ENCODE measurements at regions of chr18 and their contacts with region 1.

Region 1: DNA sequence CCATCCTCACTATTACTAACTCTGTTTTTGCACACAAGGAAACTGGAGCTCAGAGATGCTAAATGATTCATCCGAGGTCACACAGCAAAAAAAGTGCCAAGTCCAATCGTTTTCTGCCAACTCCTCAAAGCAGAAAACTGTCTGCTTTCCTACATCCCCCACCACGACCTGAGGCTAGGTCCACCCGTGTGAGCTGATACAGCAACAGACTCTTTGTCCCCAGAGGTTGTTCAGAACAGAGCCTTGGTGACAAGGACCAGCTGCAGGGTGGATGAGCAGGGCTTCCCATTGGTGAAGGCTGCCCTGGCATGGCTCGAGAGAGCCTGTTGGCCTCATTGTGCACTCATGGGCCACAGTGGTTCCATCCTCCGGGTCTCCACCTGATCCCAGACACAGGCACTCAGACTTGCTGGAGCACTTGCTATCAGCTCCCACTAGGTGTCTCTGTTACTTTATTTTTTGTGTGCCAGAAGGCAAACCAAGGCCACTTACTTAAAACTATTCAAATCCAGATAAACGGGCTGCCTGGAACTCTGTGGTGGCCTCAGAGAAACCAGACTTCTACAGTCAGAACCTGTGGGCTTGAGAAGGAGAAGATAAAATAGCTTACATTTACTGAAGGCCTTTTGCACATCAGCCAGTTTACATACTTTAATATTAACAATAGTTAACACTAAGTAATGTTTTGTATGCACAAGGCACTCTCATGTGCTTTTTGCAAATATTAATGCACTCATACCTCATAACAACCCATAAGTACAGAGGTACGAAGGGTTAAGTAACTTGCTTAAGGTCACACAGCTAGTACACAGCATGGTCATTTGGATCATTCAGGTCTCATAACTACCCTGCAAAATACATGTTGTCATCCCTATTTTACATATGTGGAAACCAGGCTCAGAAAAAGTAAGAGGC is 62.9 kb upstream of the CTIF start:
- DNase-seq: peak; percentile 78
- H3K4me3 ChIP-seq: no peak overlapping the region
- H3K27ac ChIP-seq: no peak overlapping the region
- H3K4me1 ChIP-seq: no peaks in the 10 kb centered on the region
- H3K27me3 ChIP-seq: peaks cover 3% of the 10 kb centered on the region
- CTCF ChIP-seq: peak; percentile 86

Region 2: DNA sequence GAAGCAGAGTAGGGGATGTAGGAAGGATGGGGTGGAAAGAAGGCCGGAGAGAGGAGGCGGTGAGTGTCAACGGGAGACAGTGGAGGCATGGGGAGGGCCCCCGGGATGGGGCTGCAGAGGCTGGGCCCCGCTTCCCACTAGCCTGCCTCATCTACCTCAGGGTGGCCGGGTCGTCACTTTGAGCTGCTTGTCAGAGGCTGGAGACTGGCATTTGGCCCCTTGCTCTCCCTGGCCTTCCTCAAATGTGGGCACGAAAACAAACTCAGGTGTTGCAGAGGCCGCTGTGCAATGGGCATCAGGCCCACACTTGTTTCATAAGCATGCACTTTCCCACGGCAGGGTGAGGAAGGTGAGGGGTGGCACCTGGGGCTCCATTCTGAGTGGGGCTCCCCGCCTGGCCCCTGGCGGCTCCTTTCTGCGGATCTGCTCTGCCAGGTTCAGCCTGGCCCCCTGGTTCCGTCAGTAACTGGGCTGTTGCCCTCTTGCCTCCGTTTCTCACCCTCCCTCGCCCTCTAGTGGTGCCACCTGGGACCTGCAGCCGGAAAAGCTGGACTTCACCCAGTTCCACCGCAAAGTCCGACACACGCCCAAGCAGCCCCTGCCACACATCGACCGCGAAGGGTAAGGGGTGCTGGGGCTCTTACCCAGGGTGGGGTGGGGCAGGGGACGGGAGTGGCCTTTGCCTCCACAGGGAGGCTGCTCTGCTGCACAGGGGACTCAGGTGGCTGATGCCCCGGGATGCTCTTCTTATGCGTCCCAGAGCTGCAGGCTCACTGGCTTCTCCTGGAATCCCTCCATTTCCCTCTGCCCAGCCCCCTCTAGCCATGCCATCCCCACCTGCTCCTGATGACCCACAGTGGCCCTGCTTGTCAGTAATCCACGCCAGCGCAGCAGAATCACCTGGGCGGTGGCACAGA is 188.3 kb after region 1 on chr18:
- CTCF ChIA-PET with region 1: interaction called, 12 read pairs
- POLR2A ChIA-PET with region 1: no interaction called
- intact Hi-C with region 1: loop called (anchors 1 kb)
- DNase-seq: peak; percentile 50
- H3K4me3 ChIP-seq: no peak overlapping the region
- H3K27ac ChIP-seq: no peak overlapping the region
- H3K4me1 ChIP-seq: no peaks in the 10 kb centered on the region
- H3K27me3 ChIP-seq: no peaks in the 10 kb centered on the region
- CTCF ChIP-seq: peak; percentile 90

Region 3: DNA sequence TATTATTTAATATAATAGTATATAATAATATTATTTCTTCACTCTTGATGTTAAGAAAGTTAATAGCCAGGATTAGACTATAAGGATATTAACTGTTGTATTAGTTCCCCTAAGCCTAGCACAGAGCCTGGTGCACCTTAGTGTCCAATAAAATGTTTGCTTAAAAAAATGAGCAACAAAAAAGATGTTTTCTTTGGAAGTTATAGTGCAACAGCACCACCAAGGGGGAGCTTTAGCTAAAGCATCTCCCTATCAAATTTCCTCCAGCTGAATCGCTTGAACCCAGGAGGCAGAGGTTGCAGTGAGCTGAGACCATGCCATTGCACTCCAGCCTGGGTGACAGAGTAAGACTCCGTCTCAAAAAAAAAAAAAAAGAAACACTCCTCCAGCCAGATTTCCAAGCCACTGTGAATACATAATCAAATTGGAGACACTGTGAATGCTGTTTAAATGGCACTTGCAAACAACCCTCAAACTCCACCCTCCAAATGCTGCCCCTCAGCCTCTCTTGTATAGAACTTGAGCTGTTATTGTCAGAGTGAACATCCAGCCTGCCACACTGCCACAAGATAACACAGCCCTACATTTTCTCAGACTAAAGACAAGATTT is 762.6 kb after region 1 on chr18:
- CTCF ChIA-PET with region 1: interaction called, 4 read pairs
- POLR2A ChIA-PET with region 1: no interaction called
- intact Hi-C with region 1: loop called (anchors 5 kb)
- DNase-seq: peak; percentile 72
- H3K4me3 ChIP-seq: no peak overlapping the region
- H3K27ac ChIP-seq: no peak overlapping the region
- H3K4me1 ChIP-seq: no peaks in the 10 kb centered on the region
- H3K27me3 ChIP-seq: no peaks in the 10 kb centered on the region
- CTCF ChIP-seq: peak; percentile 63